ENCODE measurements at regions of chr11 and their contacts with region 1.

Region 1: DNA sequence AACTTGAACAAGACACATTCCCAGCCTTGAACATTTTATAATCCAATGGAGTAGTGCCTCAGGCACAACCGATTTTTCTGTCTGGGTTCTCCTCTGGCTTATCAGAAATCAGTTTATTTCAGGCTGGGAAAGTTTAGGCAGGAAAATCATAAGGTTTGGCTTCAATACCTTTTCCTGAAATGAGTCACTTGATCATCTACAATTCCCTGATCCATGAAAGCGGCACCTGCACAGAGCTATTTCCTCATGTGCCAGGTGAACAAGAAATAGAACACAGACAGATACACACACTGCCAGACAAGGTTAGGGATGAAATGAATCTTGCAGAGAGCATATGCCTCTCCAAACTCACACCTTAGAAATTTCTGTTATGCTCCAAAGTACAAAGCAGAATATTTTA is 106.7 kb upstream of the OR9G4 start:
- DNase-seq: no peak
- CTCF ChIP-seq: no peak

Region 2: DNA sequence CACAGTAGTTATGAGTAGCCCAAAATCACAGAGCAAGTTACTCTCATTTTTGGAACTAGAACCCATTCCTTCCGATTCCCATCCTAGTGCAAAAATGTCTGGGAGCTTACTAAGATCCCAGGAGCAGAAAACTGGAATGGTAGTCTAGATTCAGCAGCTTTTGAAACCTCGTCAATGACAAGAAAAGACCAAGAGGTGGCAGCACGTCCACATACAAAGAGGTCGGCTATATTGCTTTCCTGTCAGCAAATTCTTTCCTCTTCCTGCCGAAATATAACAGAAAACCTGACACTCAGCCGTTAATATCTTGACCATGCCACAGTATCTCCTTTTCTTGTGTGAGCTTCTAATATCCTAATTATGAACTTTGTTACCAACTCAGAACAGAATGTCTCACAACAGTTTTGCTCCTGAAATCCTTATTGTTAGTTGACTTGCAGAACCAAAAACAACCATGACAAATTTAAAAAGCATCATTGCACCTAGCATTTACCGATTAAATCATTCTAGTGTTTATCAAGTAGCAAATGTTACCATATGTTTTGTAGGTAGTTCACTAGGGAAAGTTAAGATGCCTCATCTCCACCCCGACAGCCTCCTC is 13.9 kb before region 1 on chr11:
- CTCF ChIA-PET with region 1: interaction called, 15 read pairs
- POLR2A ChIA-PET with region 1: no interaction called
- DNase-seq: peak; percentile 37
- CTCF ChIP-seq: peak; percentile 58

Region 3: GRCh38 chr11:56910785-56911184 is 55.6 kb after region 1 on chr11:
- CTCF ChIA-PET with region 1: no interaction called
- POLR2A ChIA-PET with region 1: no interaction called
- DNase-seq: no peak
- CTCF ChIP-seq: no peak